ENCODE measurements at regions of chr16 and their contacts with region 1.

Region 1: DNA sequence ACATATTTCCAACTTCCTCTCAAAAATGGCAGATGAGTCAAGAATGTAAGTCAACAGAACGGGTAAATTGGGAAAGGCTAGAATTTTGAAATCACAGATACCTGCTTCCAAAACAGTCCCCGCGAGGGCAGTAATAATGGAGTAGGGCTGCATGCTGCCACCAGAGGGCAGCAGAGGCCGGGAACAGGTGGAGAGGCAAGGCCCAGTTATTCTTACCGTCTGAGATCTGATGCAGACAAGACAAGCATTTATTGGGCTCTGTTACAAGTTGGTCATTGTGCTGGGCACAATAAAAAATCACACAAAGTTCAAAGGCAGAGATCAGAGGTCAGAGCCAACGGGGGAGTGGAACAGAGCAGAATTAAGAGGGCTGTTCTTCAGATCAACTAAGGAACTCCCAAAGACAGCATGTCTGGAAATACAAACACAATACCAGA is 8.8 kb upstream of the MLKL start:
- DNase-seq: peak; percentile 86
- H3K4me3 ChIP-seq: no peak overlapping the region
- H3K27ac ChIP-seq: no peak overlapping the region
- H3K4me1 ChIP-seq: no peaks in the 10 kb centered on the region
- H3K27me3 ChIP-seq: no peaks in the 10 kb centered on the region
- CTCF ChIP-seq: peak; percentile 97
- EP300 ChIP-seq: no peak
- RAD21 ChIP-seq: peak; percentile 94

Region 2: GRCh38 chr16:74695450-74696422 is 13.7 kb before region 1 on chr16:
- CTCF ChIA-PET with region 1: interaction called, 13 read pairs
- POLR2A ChIA-PET with region 1: interaction called, 3 read pairs
- DNase-seq: peak; percentile 94
- H3K4me3 ChIP-seq: peak overlapping the region; percentile 50 to 55
- H3K27ac ChIP-seq: peak overlapping the region in 1 of 2 experiments; percentile 39; a peak in 1 of 4 replicates
- H3K4me1 ChIP-seq: no peaks in the 10 kb centered on the region; a peak in 1 of 4 replicates
- H3K27me3 ChIP-seq: no peaks in the 10 kb centered on the region
- CTCF ChIP-seq: no peak
- EP300 ChIP-seq: no peak
- RAD21 ChIP-seq: no peak

Region 3: GRCh38 chr16:74726716-74727115 is 17.3 kb after region 1 on chr16:
- CTCF ChIA-PET with region 1: interaction called, 15 read pairs
- POLR2A ChIA-PET with region 1: no interaction called
- DNase-seq: no peak
- H3K4me3 ChIP-seq: no peak overlapping the region
- H3K27ac ChIP-seq: no peak overlapping the region
- H3K4me1 ChIP-seq: peaks cover 0 to 9% of the 10 kb centered on the region in 2 experiments; a peak in 1 of 4 replicates
- H3K27me3 ChIP-seq: no peaks in the 10 kb centered on the region
- CTCF ChIP-seq: peak; percentile 53
- EP300 ChIP-seq: no peak
- RAD21 ChIP-seq: no peak

Region 4: GRCh38 chr16:74837056-74837455 is 127.6 kb after region 1 on chr16:
- CTCF ChIA-PET with region 1: no interaction called
- POLR2A ChIA-PET with region 1: no interaction called
- DNase-seq: no peak
- H3K4me3 ChIP-seq: no peak overlapping the region
- H3K27ac ChIP-seq: no peak overlapping the region
- H3K4me1 ChIP-seq: no peaks in the 10 kb centered on the region
- H3K27me3 ChIP-seq: no peaks in the 10 kb centered on the region
- CTCF ChIP-seq: no peak
- EP300 ChIP-seq: no peak
- RAD21 ChIP-seq: no peak

Region 5: DNA sequence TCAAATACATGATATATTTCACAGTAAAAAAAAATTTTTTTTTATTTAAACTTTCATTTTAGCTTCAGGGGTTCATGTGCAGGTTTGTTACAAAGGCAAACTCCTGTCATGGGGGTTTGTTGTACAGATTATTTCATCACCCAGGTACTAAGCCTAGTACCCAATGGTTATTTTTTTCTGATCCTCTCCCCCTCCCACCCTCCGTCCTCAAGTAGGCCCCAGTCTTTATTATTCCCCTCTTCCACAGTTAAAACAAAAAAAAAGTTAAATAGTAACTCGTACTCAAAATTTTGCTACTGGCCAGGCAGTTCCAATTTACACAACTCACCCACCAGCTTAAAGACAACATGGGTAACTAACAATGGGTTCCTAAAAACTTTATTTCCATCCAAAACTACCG is 211.6 kb after region 1 on chr16:
- CTCF ChIA-PET with region 1: no interaction called
- POLR2A ChIA-PET with region 1: no interaction called
- DNase-seq: no peak
- H3K4me3 ChIP-seq: no peak overlapping the region
- H3K27ac ChIP-seq: no peak overlapping the region
- H3K4me1 ChIP-seq: no peaks in the 10 kb centered on the region
- H3K27me3 ChIP-seq: no peaks in the 10 kb centered on the region
- CTCF ChIP-seq: no peak
- EP300 ChIP-seq: no peak
- RAD21 ChIP-seq: no peak

Measured in SK-N-SH (cell line).